PC-9 (cell line): ENCODE measurements at regions of chr11 and their contacts with region 1.

Region 1: GRCh38 chr11:28836285-28837081 is 728.3 kb downstream of the METTL15 start:
- DNase-seq: peak; percentile 35 to 61
- H3K4me3 ChIP-seq: no peak overlapping the region
- H3K27ac ChIP-seq: peak overlapping the region; percentile 43; the same call in 1 of the 2 replicates
- H3K4me1 ChIP-seq: 0 out of 2 replicates have a peak, but pooled peaks cover 10% of the 10 kb centered on the region
- H3K27me3 ChIP-seq: no peaks in the 10 kb centered on the region
- CTCF ChIP-seq: no peak

Region 2: DNA sequence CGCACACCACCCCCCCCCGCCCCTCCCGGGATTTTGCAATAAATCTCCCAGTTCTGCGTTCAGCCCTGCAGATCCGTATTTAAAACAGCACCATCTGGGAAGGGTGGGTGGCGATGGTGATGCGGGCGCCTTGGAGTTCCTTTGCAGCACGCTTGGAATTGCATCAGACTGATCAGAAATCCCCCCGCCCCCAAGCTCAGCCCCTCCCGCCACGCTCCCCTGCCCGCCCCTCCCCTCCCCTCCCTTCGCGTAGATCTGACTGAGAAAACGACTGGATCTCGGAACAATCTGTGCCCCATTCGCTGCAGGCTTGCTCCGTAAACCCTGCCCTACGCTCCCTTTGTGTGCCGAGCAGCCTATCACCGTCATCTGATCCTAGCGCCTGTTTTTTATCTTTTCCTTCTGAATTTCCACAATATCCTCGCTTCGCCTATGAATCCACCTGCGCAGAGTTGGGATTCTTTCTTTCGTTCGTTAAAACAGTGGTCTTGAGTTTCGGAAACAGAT is 1118.1 kb before region 1 on chr11:
- CTCF ChIA-PET with region 1: interaction called, 6 read pairs
- POLR2A ChIA-PET with region 1: interaction called, 11 read pairs
- intact Hi-C with region 1: no loop called
- DNase-seq: peak in 1 of 2 experiments; percentile 55
- H3K4me3 ChIP-seq: peak overlapping the region; percentile 58
- H3K27ac ChIP-seq: peak overlapping the region; percentile 68
- H3K4me1 ChIP-seq: 0 out of 2 replicates have a peak, but pooled peaks cover 7% of the 10 kb centered on the region
- H3K27me3 ChIP-seq: no peaks in the 10 kb centered on the region
- CTCF ChIP-seq: no peak

Region 3: DNA sequence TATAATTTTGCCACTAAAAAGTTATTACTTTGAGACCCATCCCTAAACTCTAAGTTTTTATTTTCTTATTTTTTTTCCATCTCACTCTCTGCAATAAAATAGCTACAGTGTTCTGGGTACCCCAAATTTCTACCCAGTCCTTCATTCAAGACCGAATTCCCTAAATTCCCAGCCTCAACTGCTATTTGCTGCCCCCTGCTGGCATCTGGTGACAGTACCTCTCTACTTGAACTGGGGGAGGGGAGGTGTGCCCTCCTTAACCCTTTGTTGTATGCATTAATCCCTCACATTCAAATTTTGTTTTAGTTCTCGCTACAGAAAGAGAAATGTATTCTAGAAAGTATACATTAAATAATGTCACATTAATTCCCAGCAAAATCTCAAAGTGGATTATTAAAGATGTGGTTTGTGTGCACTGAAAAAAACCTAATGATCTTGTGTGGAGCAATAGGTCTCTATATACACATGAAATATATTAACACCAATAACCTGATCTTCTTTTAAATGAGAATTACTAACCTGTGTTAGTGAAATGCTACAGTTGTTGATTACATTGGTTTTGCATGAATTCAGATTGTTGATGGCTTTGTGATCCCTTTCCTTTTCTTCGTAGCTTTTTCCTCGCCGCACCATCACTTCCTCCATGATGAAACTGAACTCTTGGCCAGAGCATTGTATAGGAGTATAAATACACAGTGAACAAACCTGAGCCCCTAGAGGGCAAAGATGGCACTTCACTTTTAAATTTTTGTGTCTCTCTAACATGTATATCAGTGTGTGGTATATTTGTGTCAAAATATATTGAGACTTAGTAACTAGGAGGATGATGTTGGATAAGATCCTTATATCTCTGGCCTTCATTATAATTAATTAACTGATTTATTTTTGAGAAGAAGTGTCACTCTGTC is 138.3 kb before region 1 on chr11:
- CTCF ChIA-PET with region 1: interaction called, 4 read pairs
- POLR2A ChIA-PET with region 1: no interaction called
- intact Hi-C with region 1: loop called (anchors 2 kb)
- DNase-seq: peak in 1 of 2 experiments; percentile 37
- H3K4me3 ChIP-seq: no peak overlapping the region
- H3K27ac ChIP-seq: no peak overlapping the region
- H3K4me1 ChIP-seq: peaks cover 24% of the 10 kb centered on the region
- H3K27me3 ChIP-seq: no peaks in the 10 kb centered on the region
- CTCF ChIP-seq: peak; percentile 81

Region 4: GRCh38 chr11:29019960-29020683 is 183.6 kb after region 1 on chr11:
- CTCF ChIA-PET with region 1: no interaction called
- POLR2A ChIA-PET with region 1: interaction called, 7 read pairs
- intact Hi-C with region 1: loop called (anchors 1 kb)
- DNase-seq: peak in 1 of 2 experiments; percentile 26
- H3K4me3 ChIP-seq: no peak overlapping the region
- H3K27ac ChIP-seq: no peak overlapping the region
- H3K4me1 ChIP-seq: peaks cover 6% of the 10 kb centered on the region; the same call in 1 of the 2 replicates
- H3K27me3 ChIP-seq: no peaks in the 10 kb centered on the region
- CTCF ChIP-seq: peak; percentile 31; the same call in 1 of the 2 replicates

Region 5: GRCh38 chr11:29333993-29334775 is 497.7 kb after region 1 on chr11:
- CTCF ChIA-PET with region 1: no interaction called
- POLR2A ChIA-PET with region 1: interaction called, 4 read pairs
- intact Hi-C with region 1: loop called (anchors 2 kb)
- DNase-seq: no peak
- H3K4me3 ChIP-seq: no peak overlapping the region
- H3K27ac ChIP-seq: no peak overlapping the region
- H3K4me1 ChIP-seq: no peaks in the 10 kb centered on the region
- H3K27me3 ChIP-seq: peaks cover 4% of the 10 kb centered on the region
- CTCF ChIP-seq: peak; percentile 74